ENCODE measurements at regions of chr20 and their contacts with region 1.

Region 1: DNA sequence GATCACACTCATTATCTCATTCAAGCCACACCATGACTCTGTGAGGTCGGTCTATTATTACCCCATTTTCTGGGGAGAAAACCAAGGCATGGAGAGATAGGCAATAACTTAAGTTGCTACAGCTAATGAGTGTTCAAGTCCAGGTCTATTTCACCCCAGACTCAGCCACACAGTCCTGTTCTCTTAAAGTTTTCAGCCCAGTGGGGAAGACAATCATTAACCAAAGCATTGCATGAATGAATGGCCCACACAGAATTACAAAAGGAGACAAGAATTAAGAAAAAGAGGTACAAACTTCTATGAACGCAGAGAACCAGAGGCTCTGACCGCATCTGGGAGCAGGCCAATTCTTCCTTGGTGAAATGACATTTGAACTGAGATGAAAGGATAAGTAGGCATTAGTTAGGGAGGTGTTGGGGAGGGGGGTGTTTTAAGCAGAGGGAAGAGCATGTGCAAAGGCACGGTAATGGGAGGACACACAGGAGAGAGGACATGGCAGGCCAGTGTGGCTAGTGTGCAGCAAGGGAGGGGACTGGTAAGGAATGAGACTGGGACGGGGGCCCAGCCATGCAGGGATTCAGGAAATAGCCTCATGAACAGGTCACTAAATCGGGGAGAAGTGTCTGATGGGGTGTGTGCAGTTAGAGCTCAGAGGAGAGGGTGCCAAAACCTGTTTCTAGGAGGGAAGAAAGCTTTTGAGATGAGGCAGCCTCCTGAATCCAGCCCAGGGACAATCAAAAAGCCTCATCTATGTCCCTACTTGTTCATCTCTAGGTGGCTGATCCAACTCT is 7.3 kb downstream of the BPI start:
- DNase-seq: no peak
- H3K4me3 ChIP-seq: no peak overlapping the region
- H3K27ac ChIP-seq: no peak overlapping the region
- H3K4me1 ChIP-seq: peaks cover 9% of the 10 kb centered on the region
- H3K27me3 ChIP-seq: no peaks in the 10 kb centered on the region
- CTCF ChIP-seq: no peak

Region 2: DNA sequence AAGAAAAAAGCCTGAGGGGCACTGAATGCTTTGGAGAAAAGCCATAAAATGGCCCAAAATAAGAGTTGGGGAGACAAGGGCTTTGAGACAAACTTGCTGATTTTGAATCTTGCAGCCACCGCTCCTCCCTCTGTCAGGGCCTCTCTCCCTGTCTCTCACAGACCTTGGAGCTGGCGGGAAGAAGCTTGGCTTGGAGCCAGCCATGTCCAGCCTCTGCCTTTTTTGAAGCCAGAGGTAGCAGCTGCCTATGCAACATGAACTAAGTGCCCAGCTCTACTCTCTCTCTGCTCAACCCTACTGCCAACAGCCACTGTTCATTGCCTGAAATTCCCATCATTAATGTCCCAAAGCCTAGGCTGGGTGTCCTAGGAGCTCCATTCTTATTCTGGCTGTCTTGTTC is 681.1 kb before region 1 on chr20:
- CTCF ChIA-PET with region 1: no interaction called
- dilution Hi-C with region 1: no loop called
- in situ Hi-C with region 1: no loop called
- intact Hi-C with region 1: no loop called
- DNase-seq: no peak
- H3K4me3 ChIP-seq: no peak overlapping the region
- H3K27ac ChIP-seq: no peak overlapping the region
- H3K4me1 ChIP-seq: no peaks in the 10 kb centered on the region
- H3K27me3 ChIP-seq: no peaks in the 10 kb centered on the region
- CTCF ChIP-seq: no peak

Region 3: DNA sequence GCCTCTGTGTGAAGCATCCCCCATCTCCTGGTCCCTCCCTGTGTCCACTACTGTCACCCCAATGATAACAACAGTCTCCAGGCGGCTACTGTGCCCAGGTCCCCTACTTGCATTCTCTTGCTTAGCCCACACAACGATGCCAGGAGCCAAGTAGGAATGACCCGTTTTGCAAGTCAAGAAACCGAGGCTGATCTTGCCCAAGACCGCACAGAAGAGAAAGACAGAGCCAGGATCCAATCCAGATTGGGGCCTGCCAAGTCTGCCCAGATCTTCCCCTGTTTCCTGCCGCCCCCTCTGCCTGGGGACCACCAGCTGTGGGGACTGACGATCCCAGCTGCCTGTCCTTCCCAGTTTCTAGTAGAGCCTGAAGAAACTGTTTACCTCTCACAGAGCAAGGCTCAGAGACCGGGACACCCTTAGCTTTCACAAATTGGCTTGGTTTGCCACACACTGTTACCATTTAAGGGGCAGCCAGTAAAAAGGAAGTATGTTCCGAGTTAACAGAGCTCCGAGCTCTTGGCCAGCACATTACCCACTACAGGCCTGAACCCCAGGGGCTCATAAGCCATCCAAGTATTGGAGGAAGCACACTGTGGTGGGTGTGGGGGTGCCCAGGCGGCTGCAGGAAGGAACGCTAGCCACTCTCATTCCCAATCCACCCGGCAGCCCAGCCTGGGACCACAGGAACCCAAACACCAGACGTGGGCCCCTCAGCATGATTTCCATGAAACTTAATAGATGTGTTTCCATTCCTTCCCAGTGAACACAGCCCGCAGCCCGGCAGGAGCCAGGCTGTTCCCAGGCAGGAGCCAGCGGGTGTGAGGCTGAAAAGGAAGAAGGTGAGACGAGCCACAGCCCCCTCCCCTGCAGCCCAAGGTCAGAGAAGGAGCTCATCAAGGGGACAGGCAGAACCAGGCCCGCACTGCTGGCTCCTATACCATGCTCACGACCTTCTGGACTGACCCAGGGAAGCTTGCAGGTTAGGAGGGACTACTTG is 58.7 kb before region 1 on chr20:
- CTCF ChIA-PET with region 1: no interaction called
- dilution Hi-C with region 1: loop called (anchors 5 kb)
- in situ Hi-C with region 1: no loop called
- intact Hi-C with region 1: no loop called
- DNase-seq: no peak
- H3K4me3 ChIP-seq: no peak overlapping the region
- H3K27ac ChIP-seq: no peak overlapping the region
- H3K4me1 ChIP-seq: no peaks in the 10 kb centered on the region
- H3K27me3 ChIP-seq: no peaks in the 10 kb centered on the region
- CTCF ChIP-seq: no peak

Region 4: GRCh38 chr20:38460040-38460623 is 148.8 kb after region 1 on chr20:
- CTCF ChIA-PET with region 1: no interaction called
- dilution Hi-C with region 1: no loop called
- in situ Hi-C with region 1: no loop called
- intact Hi-C with region 1: no loop called
- DNase-seq: peak; percentile 88
- H3K4me3 ChIP-seq: no peak overlapping the region
- H3K27ac ChIP-seq: peak overlapping the region; percentile 41
- H3K4me1 ChIP-seq: peaks cover 9% of the 10 kb centered on the region
- H3K27me3 ChIP-seq: no peaks in the 10 kb centered on the region
- CTCF ChIP-seq: no peak

Region 5: DNA sequence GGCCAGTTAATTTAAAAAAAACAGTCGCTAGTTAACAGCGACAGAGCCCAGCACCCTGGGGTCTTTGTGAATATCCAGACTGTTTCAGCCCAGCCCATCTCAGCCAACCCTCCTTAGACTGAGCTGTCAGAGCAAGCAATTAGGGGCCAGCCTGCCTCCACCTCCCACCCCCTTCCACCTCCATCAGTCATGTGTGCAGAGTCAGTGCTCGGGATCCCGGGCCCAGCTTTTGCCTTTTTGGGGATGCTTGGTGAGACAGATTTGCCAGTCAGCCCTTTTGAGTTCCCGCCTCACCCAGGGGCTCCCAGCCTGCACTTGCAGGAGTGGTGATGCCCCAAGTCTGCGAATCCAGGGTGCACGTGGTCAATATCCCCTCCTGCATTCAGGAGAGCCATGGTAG is 608.4 kb after region 1 on chr20:
- CTCF ChIA-PET with region 1: no interaction called
- dilution Hi-C with region 1: no loop called
- in situ Hi-C with region 1: no loop called
- intact Hi-C with region 1: no loop called
- DNase-seq: no peak
- H3K4me3 ChIP-seq: no peak overlapping the region
- H3K27ac ChIP-seq: no peak overlapping the region
- H3K4me1 ChIP-seq: no peaks in the 10 kb centered on the region
- H3K27me3 ChIP-seq: no peaks in the 10 kb centered on the region
- CTCF ChIP-seq: no peak

Measured in mammary epithelial cell (primary cell).